ENCODE measurements at regions of chr16 and their contacts with region 1.

Region 1: GRCh38 chr16:48687421-48688038 is 77.5 kb upstream of the N4BP1 start:
- DNase-seq: peak; percentile 59
- H3K4me3 Mint-ChIP-seq: no peak overlapping the region
- H3K27ac Mint-ChIP-seq: no peak overlapping the region
- H3K4me1 Mint-ChIP-seq: peaks cover 8% of the 10 kb centered on the region
- H3K27me3 Mint-ChIP-seq: peaks cover 16% of the 10 kb centered on the region

Region 2: DNA sequence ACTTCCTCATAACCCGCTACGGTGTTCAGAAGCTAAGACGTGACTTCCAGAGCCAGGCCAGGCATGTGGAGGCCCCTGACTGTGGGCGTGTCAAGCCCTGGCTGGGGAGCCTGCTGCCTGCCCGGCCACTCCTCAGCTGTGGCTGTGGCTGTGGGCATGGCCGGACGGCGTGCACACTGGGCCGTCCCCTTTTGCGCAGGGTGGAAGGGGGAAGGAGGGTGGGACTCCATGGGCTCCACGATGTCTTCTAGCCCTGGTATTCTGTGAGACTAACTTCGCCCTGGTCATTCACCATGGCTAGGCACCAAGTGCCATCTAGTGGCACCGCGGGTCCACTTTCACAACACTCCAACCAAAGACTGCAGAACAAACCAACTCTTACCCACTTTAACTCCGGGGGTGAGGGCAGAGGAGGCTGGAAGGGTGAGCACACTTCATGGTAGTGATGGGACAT is 145.5 kb before region 1 on chr16:
- CTCF ChIA-PET with region 1: no interaction called
- intact Hi-C with region 1: no loop called
- DNase-seq: peak; percentile 38
- H3K4me3 Mint-ChIP-seq: no peak overlapping the region
- H3K27ac Mint-ChIP-seq: no peak overlapping the region
- H3K4me1 Mint-ChIP-seq: peaks cover 17% of the 10 kb centered on the region
- H3K27me3 Mint-ChIP-seq: no peaks in the 10 kb centered on the region

Region 3: DNA sequence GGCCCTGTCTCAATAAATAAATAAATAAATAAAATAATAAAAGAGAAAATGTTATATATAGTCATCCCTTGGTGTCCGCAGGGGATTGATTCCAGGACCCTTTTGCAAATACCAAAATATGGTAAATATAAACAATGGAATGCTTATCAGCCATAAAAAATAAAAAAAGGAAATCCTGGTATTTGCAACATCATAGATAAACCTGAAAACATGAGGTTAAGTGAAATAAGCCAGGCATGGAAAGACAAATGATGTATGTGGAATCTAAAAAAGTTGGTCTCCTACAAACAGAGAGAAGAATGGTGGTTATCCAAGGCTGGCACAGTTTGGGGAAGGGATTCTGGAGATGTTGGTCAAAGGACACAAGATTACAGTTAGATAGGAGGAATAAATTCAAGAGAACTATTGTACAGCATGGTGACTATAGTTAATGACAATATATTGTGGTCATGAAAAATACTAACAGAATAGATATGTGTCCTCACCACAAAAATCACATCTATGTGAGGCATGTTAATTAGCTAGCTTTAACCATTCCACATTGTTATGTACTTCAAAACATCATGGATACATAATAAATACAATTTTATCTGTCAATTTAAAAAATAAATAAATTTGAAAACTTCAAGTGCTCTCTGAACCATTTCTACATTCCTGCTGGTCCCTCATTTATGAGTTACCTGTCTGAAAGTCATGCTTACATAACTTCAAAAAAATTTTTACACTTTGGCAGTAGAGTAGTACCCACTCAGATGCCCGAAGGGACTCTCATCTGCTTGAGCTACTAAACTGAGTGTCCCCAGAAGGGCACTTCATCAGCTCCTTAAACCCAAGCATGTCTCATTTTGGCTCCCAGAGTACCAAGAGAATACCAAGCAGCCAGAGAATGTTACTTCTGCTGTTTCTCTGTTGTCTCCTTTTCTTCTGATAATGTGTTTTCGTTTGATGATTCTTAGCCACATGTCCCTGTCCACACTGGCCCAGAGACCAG is 104.2 kb before region 1 on chr16:
- CTCF ChIA-PET with region 1: no interaction called
- intact Hi-C with region 1: no loop called
- DNase-seq: no peak
- H3K4me3 Mint-ChIP-seq: no peak overlapping the region
- H3K27ac Mint-ChIP-seq: peak overlapping the region; percentile 33
- H3K4me1 Mint-ChIP-seq: peaks cover 26% of the 10 kb centered on the region
- H3K27me3 Mint-ChIP-seq: no peaks in the 10 kb centered on the region

Region 4: GRCh38 chr16:49021136-49021535 is 333.6 kb after region 1 on chr16:
- CTCF ChIA-PET with region 1: no interaction called
- intact Hi-C with region 1: no loop called
- DNase-seq: no peak
- H3K4me3 Mint-ChIP-seq: no peak overlapping the region
- H3K27ac Mint-ChIP-seq: no peak overlapping the region
- H3K4me1 Mint-ChIP-seq: no peaks in the 10 kb centered on the region
- H3K27me3 Mint-ChIP-seq: peaks cover 5% of the 10 kb centered on the region

Region 5: GRCh38 chr16:49281843-49282642 is 594.5 kb after region 1 on chr16:
- CTCF ChIA-PET with region 1: no interaction called
- intact Hi-C with region 1: loop called (anchors 1 kb)
- DNase-seq: peak; percentile 78
- H3K4me3 Mint-ChIP-seq: peak overlapping the region; percentile 53
- H3K27ac Mint-ChIP-seq: no peak overlapping the region
- H3K4me1 Mint-ChIP-seq: peaks cover 21% of the 10 kb centered on the region
- H3K27me3 Mint-ChIP-seq: peaks cover 59% of the 10 kb centered on the region

Region 6: GRCh38 chr16:49350265-49351095 is 663.0 kb after region 1 on chr16:
- CTCF ChIA-PET with region 1: interaction called, 10 read pairs
- intact Hi-C with region 1: loop called (anchors 1 kb)
- DNase-seq: peak; percentile 71
- H3K4me3 Mint-ChIP-seq: no peak overlapping the region
- H3K27ac Mint-ChIP-seq: no peak overlapping the region
- H3K4me1 Mint-ChIP-seq: no peaks in the 10 kb centered on the region
- H3K27me3 Mint-ChIP-seq: peaks cover 25% of the 10 kb centered on the region